ENCODE measurements at regions of chr9 and their contacts with region 1.

Region 1: GRCh38 chr9:126638571-126639132 is 24.9 kb downstream of the LMX1B start:
- DNase-seq: no peak
- H3K4me3 ChIP-seq: no peak overlapping the region
- CTCF ChIP-seq: no peak
- POLR2A ChIP-seq: no peak

Region 2: GRCh38 chr9:126673689-126674364 is 35.2 kb after region 1 on chr9:
- intact Hi-C with region 1: no loop called
- DNase-seq: no peak
- H3K4me3 ChIP-seq: no peak overlapping the region
- CTCF ChIP-seq: no peak
- POLR2A ChIP-seq: no peak

Region 3: GRCh38 chr9:126704873-126705766 is 66.5 kb after region 1 on chr9:
- intact Hi-C with region 1: loop called (anchors 2 kb)
- DNase-seq: peak; percentile 76 to 96
- H3K4me3 ChIP-seq: no peak overlapping the region
- CTCF ChIP-seq: peak in 1 of 3 donors; percentile 80
- POLR2A ChIP-seq: no peak